Posterior cingulate gyrus (tissue), 11 donors: ENCODE measurements at regions of chr9 and their contacts with region 1.

Region 1: GRCh38 chr9:38079461-38080031 is 10.5 kb upstream of the SHB start:
- DNase-seq: no peak

Region 2: GRCh38 chr9:38154501-38155421 is 75.2 kb after region 1 on chr9:
- intact Hi-C with region 1: loop called (anchors 5 kb)
- DNase-seq: no peak

Region 3: GRCh38 chr9:38423973-38424843 is 344.7 kb after region 1 on chr9 and contains the start of gene IGFBPL1:
- intact Hi-C with region 1: no loop called
- DNase-seq: peak in 4 of 10 donors; percentile 9 to 90 (median 54)